ENCODE measurements at regions of chr20 and their contacts with region 1.

Region 1: DNA sequence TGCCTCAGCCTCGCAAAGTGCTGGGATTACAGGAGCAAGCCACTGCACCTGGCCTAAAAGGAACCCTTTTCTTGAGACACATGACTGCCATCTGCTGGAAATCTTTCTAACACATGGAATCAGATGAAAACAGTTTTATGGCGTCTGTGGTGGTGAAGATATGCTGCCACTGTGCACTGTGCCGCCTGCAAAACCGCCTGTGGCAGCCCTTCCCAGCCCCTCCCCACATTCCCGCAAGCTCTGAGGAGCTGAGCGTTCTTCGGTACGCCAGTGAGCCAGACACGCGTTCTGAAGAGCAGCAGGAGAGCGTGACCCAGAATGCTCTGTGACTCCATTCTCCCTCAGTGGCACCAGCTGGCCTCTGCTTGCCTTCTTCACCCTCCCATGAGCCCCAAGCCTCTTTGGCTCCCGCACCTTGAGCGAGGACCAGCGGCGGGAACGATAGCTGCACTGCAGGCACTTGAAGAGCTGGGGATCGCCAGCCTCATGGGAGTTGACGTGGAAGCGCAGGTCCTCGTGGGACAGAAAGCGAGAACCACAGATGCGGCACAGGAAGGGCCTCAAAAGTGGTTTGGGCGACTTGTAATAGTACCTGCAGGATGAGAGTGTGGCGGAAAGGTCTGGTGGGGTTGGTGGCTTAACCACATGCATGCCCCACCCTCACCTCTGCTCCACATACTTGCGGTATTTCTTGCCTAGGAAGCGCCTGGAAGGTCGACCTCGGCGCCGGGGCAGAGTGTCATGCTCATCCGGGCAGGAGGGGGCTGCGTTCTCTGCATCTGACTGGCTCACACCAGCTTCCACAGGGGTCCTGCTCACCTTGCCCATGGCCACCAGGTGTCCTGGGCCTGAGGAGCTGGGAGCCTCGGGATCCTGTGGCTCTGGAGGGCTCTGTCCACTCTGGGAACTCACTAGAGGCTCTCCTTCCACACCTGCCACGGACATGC is 8.7 kb downstream of the ZNF335 start:
- DNase-seq: no peak
- H3K4me3 Mint-ChIP-seq: no peak overlapping the region
- H3K27ac Mint-ChIP-seq: no peak overlapping the region
- H3K4me1 Mint-ChIP-seq: no peaks in the 10 kb centered on the region
- H3K27me3 Mint-ChIP-seq: no peaks in the 10 kb centered on the region

Region 2: DNA sequence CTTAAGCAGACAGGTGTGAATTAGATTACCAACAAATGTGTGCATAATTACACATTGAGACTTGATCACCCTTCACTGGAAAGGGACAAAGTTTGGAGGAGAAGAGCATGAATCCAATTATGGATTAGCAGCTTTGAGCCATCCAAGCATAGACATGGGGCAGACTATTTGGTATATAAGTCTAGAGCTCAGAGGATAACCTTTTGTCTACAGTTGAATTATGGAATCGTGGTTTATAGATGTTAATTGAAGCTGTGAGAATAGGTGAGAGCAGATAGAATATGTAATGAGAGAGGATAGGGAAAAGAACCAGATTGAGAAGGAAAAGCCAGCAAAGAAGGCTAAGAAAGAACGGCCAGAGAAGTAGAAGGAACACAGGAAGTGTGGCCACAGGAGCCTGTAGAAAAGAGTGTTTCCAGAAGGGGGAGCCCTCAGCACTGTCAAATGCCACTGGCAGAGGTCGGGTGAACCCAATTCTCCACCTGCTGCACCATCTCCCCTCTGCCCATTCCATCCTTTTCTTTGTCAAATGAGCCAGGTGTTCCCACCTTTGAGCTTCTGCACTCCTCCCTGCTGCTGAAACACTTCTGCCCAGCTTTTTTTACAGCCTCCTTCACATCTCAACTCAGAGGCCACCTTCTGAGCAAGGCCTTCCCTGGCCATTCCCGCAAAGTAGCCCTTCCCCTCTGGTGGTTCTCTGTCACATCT is 164.2 kb before region 1 on chr20:
- intact Hi-C with region 1: loop called (anchors 1 kb)
- DNase-seq: peak; percentile 64
- H3K4me3 Mint-ChIP-seq: no peak overlapping the region
- H3K27ac Mint-ChIP-seq: peak overlapping the region; percentile 4
- H3K4me1 Mint-ChIP-seq: peaks cover 20% of the 10 kb centered on the region
- H3K27me3 Mint-ChIP-seq: no peaks in the 10 kb centered on the region

Region 3: DNA sequence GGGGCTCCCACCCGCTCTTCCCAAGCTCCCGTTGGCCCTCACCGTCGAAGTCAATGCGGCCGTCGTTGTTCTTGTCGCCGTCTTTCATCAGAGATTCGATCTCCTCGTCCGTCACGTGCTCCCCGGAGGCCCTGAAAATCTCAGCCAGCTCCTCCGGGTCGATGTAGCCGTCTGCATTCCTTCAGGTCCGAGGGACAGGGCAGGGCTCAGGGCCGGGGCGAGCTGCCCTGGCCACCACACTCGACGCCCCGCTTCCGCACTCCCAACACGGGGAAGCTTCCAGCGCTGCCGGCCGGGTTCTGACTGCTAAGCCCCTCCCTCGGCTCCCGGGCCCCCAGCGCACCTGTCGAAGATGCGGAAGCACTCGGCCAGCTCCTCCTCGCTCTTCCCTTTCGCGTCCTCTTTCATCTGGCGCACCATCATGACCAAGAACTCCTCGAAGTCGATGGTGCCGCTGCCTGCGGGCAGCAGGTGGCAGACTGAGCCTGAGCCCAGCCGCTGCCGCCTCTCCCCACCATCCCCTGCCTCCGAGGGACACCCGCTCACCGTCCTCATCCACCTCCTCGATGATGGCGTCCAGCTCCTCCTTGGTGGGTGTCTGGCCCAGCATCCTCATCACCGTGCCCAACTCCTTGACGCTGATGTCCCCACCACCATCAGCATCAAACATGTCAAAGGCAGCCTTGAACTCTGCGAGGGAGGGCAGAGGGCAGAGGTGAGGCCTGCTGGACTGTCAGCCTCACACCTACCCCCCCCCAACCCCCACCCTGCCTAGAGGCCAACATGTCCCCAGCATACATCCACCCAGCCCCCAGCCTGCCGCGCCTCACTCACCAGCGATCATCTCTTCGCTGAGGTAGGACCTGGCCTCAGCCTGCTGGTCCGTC is 139.1 kb before region 1 on chr20:
- intact Hi-C with region 1: loop called (anchors 1 kb)
- DNase-seq: peak; percentile 28
- H3K4me3 Mint-ChIP-seq: peak overlapping the region; percentile 68
- H3K27ac Mint-ChIP-seq: no peak overlapping the region
- H3K4me1 Mint-ChIP-seq: peaks cover 23% of the 10 kb centered on the region
- H3K27me3 Mint-ChIP-seq: peaks cover 37% of the 10 kb centered on the region

Region 4: DNA sequence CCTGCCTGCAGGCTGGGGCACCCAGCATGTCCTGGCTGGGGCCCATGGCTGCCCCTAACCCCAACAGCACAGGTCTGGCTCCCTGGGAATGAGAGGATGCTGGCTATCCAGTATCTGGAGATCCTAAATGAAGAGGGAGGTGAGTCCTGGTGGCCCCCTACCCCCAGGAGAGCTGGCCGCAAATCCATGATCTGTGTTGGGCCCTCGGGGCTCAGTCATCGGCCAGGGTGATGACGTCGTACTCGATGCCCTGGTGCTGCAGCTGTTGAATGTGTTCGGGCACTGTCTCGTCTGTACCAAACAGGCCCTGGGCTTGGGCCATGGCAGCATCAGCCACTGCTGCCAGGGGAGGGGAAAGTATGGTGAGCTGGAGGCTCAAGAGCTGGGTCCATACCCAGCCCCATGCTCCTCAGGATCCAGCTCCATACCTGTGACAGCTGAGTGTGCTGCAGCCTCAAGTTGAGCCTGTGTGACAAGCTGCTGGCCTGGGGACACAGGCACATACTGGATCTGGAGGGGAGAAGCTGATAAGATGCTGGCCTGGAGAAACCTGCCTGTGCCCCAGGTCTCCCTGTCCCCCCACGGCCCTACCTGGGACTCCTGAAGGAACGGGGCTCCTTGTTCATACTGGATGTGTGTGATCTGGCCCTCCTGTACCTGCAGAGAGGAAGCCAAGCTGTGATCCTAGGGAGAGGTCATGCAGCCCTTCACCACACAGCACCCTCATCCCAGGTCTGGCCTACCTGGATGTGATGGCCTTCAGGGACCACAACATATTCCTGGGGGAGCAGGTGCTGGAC is 14.4 kb before region 1 on chr20:
- intact Hi-C with region 1: no loop called
- DNase-seq: no peak
- H3K4me3 Mint-ChIP-seq: no peak overlapping the region
- H3K27ac Mint-ChIP-seq: no peak overlapping the region
- H3K4me1 Mint-ChIP-seq: peaks cover 11% of the 10 kb centered on the region
- H3K27me3 Mint-ChIP-seq: no peaks in the 10 kb centered on the region

Measured in activated T-helper 1 cell treated with anti-CD3 and anti-CD28 coated beads, Interleukin-12 subunit alpha, Interleukin-12 subunit beta, Interleukin-2, Interleukin-4 antibody, amounts not matched to agents 30 ng/mL and 10 ng/mL and 1 ng/mL, durations not matched to agents 14 hours and 24 hours and 36 hours (primary cell).